Naive thymus-derived CD8-positive, alpha-beta T cell (primary cell): ENCODE measurements at regions of chr5 and their contacts with region 1.

Region 1: DNA sequence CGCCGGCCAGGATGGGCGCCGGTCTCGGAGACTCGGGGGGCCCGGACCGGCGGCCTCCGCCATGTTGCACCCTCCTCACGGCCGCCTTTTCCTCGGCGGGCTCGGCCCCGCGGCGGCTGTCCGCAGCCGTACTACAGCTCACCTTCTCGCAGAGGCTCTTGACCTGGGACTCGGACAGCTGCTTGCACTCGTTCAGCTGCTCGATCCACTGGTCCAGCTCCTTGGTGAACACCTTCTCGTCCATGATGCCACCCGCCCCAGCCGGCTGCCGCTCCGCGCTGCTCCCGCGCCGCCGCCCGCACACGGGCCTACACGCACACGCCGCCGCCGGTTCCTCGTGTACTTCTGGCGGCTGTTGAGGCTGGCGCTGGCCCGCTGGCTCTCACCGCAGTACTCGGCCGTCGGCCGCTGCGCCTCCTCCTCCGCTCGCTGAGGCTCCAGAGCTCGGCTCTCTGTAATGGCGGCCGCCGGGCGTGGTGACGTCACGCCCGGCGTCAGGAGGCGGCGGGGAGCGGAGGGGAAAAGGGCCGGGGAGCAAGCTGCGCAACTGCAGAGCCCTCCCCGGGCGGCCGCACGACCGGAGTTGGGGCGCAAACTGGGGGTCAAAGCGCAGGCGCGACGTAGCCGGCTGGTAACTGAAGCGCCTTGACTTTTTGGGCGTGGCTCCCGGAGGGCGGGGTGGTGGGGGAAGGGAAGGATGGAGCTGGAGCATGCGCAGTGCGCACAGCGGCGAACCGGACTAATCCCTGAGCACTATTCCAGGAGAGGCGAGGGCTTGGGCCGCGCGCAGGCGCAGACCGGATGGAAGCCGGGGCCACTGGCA is at the start of gene PPP2CA:
- DNase-seq: peak; percentile 97 to 100 (median 99)
- ATAC-seq: peak; percentile 73 to 76
- H3K4me3 Mint-ChIP-seq: peak within 1 kb of the TSS; percentile 88 to 100 (median 96)
- H3K27ac Mint-ChIP-seq: peak within 1 kb of the TSS; percentile 92 to 99 (median 98)
- H3K4me1 Mint-ChIP-seq: peaks cover 23 to 60% (median 52%) of the 10 kb centered on the region in 4 donors
- H3K27me3 Mint-ChIP-seq: peaks cover 0 to 3% (median 0%) of the 10 kb centered on the region in 5 donors
- polyA plus RNA-seq, gene PPP2CA: 185 to 192 (median 191) TPM

Region 2: DNA sequence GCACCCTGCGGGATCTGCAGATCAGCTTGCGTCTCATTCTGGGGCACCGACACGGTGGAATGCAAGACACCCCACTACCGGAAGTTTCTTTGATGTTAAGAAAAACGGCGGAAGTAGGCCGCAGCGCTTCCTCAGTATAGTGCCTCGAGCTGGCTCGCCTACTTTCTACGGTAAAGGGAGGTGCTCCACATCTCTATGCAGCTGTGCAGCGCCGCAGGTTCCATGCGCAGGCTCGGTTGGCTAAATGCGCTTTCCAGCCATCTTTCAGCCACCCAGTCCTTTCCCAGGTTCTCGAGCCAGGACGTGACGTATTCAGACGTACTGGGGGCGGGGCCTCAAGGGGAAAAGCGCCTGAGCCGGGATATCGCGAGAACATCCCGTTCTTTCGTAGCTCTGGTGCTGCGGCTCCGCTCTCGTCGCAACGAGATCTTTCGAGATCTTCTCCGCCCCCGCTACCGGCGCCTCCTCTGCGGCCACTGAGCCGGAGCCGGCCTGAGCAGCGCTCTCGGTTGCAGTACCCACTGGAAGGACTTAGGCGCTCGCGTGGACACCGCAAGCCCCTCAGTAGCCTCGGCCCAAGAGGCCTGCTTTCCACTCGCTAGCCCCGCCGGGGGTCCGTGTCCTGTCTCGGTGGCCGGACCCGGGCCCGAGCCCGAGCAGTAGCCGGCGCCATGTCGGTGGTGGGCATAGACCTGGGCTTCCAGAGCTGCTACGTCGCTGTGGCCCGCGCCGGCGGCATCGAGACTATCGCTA is 1174.1 kb before region 1 on chr5 and contains the start of gene HSPA4:
- POLR2A ChIA-PET with region 1: interaction called, 10 read pairs
- DNase-seq: peak; percentile 89 to 99 (median 98)
- ATAC-seq: peak; percentile 79 to 85
- H3K4me3 Mint-ChIP-seq: peak within 1 kb of the TSS; percentile 95 to 99 (median 98)
- H3K27ac Mint-ChIP-seq: peak within 1 kb of the TSS; percentile 99 to 100 (median 100)
- H3K4me1 Mint-ChIP-seq: peaks cover 21 to 61% (median 53%) of the 10 kb centered on the region in 4 donors
- H3K27me3 Mint-ChIP-seq: no peaks in the 10 kb centered on the region
- polyA plus RNA-seq, gene HSPA4: 32.8 to 40.4 (median 37.7) TPM

Region 3: GRCh38 chr5:134145779-134146581 is 79.8 kb before region 1 on chr5:
- POLR2A ChIA-PET with region 1: interaction called, 23 read pairs
- DNase-seq: peak; percentile 66 to 89 (median 80)
- ATAC-seq: peak; percentile 63 to 66
- H3K4me3 Mint-ChIP-seq: peak overlapping the region in 4 of 10 donors; percentile 12 to 69 (median 48)
- H3K27ac Mint-ChIP-seq: peak overlapping the region; percentile 77 to 96 (median 94)
- H3K4me1 Mint-ChIP-seq: peaks cover 34 to 70% (median 56%) of the 10 kb centered on the region in 4 donors
- H3K27me3 Mint-ChIP-seq: no peaks in the 10 kb centered on the region

Region 4: GRCh38 chr5:134209477-134210240 is 16.2 kb before region 1 on chr5:
- POLR2A ChIA-PET with region 1: interaction called, 13 read pairs
- DNase-seq: no peak
- ATAC-seq: no peak
- H3K4me3 Mint-ChIP-seq: peak overlapping the region in 5 of 10 donors; percentile 4 to 51 (median 19)
- H3K27ac Mint-ChIP-seq: peak overlapping the region in 4 of 10 donors; percentile 9 to 53 (median 36)
- H3K4me1 Mint-ChIP-seq: peaks cover 19 to 80% (median 65%) of the 10 kb centered on the region in 4 donors
- H3K27me3 Mint-ChIP-seq: no peaks in the 10 kb centered on the region

Region 5: GRCh38 chr5:134236318-134236717 is 10.5 kb after region 1 on chr5:
- POLR2A ChIA-PET with region 1: interaction called, 11 read pairs
- DNase-seq: no peak
- ATAC-seq: no peak
- H3K4me3 Mint-ChIP-seq: no peak overlapping the region
- H3K27ac Mint-ChIP-seq: no peak overlapping the region
- H3K4me1 Mint-ChIP-seq: peaks cover 0 to 2% (median 0%) of the 10 kb centered on the region in 4 donors
- H3K27me3 Mint-ChIP-seq: peaks cover 0 to 2% (median 0%) of the 10 kb centered on the region in 5 donors

Region 6: GRCh38 chr5:134370871-134371833 is 145.3 kb after region 1 on chr5 and contains the start of gene UBE2B:
- POLR2A ChIA-PET with region 1: interaction called, 23 read pairs
- DNase-seq: peak; percentile 94 to 99 (median 97)
- ATAC-seq: peak; percentile 68 to 75
- H3K4me3 Mint-ChIP-seq: peak within 1 kb of the TSS; percentile 88 to 99 (median 98)
- H3K27ac Mint-ChIP-seq: peak within 1 kb of the TSS; percentile 91 to 100 (median 100)
- H3K4me1 Mint-ChIP-seq: peaks cover 22 to 70% (median 61%) of the 10 kb centered on the region in 4 donors
- H3K27me3 Mint-ChIP-seq: peaks cover 0 to 3% (median 0%) of the 10 kb centered on the region in 5 donors
- polyA plus RNA-seq, gene UBE2B: 55.2 to 80.3 (median 77.6) TPM

Region 7: DNA sequence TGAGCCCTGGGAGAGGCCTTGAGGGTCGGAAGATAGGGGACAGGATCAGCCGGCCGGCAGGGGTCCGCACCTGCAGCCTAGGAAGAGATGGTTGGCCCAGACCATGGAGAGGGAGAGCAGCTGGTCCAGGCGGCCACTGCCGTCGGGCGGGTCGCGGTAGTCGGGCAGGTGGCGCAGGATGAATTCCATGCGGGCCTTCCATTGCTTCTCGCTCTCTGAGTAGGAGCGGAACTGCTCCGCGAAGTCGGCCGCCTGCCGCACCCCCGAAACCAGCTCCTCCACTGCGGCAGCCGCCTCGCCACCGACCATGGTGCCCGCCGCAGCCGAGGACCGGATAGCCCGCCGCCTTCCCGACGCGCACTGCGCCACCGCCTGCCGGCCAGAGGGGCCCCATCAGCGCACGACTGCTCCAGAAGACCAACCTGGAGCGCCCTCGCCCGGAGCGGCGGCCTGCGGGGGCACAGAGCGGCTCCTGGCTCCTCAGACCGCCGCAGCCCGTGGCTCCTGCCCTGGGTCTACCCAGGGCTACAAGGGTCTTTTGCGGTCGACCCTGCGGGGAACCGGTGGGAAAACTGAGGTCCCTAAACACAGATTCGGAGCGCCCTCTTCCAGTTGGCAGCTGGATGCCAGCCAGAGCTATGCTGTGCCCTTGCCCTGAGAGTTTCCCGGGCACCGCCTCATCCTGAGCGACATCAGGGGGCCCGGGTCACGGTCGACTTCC is 185.9 kb after region 1 on chr5 and contains the start of gene CDKN2AIPNL:
- POLR2A ChIA-PET with region 1: interaction called, 14 read pairs
- DNase-seq: peak; percentile 77 to 94 (median 88)
- ATAC-seq: peak; percentile 99
- H3K4me3 Mint-ChIP-seq: peak within 1 kb of the TSS; percentile 88 to 95 (median 93)
- H3K27ac Mint-ChIP-seq: peak within 1 kb of the TSS; percentile 85 to 96 (median 92)
- H3K4me1 Mint-ChIP-seq: peaks cover 16 to 41% (median 36%) of the 10 kb centered on the region in 4 donors
- H3K27me3 Mint-ChIP-seq: no peaks in the 10 kb centered on the region
- polyA plus RNA-seq, gene CDKN2AIPNL: 28.0 to 34.2 (median 33.6) TPM